ENCODE measurements at regions of chr9 and their contacts with region 1.

Region 1: DNA sequence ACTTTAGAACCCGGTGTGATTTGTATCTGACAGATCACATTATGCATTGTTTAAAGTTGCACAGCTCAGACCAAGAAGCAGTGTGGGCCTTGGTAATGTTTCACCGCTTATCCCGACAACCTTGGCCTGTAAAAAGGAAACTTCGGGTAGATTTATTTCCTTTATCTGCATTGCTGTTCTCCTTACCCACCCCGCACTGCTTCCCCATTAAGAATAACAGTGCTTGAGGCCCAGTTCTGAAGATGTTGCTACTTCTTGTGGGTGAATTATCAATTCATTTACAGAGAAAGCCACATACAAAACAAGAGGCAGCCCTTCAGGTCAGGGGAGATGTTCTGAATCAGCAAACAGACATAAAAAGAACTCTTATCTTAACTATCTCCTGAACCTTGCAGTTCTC is 8.4 kb downstream of the SMARCA2 start:
- DNase-seq: no peak
- H3K4me3 ChIP-seq: peak overlapping the region in 4 of 59 donors; percentile 0 to 16 (median 8)
- H3K27ac ChIP-seq: peak overlapping the region in 37 of 59 donors; percentile 3 to 78 (median 47)
- H3K27me3 ChIP-seq: no peaks in the 10 kb centered on the region
- CTCF ChIP-seq: no peak

Region 2: DNA sequence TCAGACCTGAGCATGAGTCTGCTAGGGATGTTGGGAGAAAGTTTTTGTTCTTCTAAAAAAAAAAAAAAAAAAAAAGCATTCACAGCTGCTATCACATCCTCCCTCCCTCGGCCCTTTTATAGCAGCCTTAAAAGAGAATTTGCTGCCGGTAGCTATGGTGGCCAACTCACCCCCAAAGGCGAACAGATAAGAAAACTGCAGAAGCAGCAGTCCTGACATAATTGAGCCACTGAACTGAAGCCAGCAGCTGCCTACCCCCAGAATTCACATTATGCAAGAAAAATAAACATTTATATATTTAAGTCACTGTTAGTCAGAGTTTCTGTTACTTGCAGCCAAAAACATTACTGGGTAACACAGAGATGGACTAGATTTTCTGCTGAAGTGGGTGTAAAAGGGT is 132.7 kb before region 1 on chr9:
- intact Hi-C with region 1: no loop called
- DNase-seq: peak in 1 of 10 donors; percentile 29
- H3K4me3 ChIP-seq: no peak overlapping the region
- H3K27ac ChIP-seq: no peak overlapping the region
- H3K27me3 ChIP-seq: peaks cover 0 to 8% (median 0%) of the 10 kb centered on the region in 45 donors
- CTCF ChIP-seq: no peak

Region 3: GRCh38 chr9:2849941-2850340 is 826.4 kb after region 1 on chr9:
- intact Hi-C with region 1: loop called in 1 of 2 experiments (anchors 10 kb)
- DNase-seq: no peak
- H3K4me3 ChIP-seq: no peak overlapping the region
- H3K27ac ChIP-seq: no peak overlapping the region
- H3K27me3 ChIP-seq: no peaks in the 10 kb centered on the region
- CTCF ChIP-seq: no peak